ENCODE measurements at regions of chr1 and their contacts with region 1.

Region 1: DNA sequence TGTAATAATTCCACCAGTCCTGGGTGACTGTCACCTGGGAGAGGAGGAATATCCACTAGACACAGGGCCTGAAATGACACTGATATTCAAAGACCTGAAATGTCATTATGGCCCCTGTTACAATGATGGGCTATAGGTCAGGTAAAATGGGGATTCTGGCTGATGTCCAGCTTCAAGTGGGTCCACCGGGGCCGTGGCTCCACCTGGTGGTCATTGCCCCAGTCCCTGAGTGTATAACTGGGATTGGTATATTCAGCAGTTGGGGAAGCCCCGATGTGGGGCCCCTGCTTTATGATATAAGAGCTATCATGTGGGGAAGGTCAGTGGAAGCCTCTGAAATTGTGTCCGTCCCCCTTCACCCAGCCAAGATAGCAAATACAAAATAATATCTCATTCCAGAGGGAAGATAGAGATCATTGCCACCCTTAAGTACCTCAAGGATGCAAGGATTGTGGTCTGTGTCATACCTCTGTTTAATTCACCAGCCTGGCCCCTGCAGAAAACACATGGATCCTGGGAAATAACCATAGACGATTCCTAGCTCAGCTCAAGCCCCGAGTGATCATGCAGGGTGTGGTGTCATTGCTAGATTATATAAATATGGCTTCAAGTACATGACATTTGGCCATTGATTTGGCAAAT is 19.4 kb downstream of the PLEKHO1 start:
- DNase-seq: peak; percentile 52 to 88 (median 75)
- H3K4me3 ChIP-seq: no peak overlapping the region
- H3K27ac ChIP-seq: no peak overlapping the region
- H3K4me1 ChIP-seq: peaks cover 0 to 12% of the 10 kb centered on the region in 2 donors
- H3K27me3 ChIP-seq: no peaks in the 10 kb centered on the region
- CTCF ChIP-seq: peak; percentile 70 to 89 (median 83)
- POLR2A ChIP-seq: no peak

Region 2: GRCh38 chr1:150072959-150073358 is 96.1 kb before region 1 on chr1:
- intact Hi-C with region 1: loop called (anchors 5 kb)
- DNase-seq: no peak
- H3K4me3 ChIP-seq: no peak overlapping the region
- H3K27ac ChIP-seq: no peak overlapping the region
- H3K4me1 ChIP-seq: peaks cover 0 to 15% of the 10 kb centered on the region in 2 donors
- H3K27me3 ChIP-seq: no peaks in the 10 kb centered on the region
- CTCF ChIP-seq: peak; percentile 5 to 69 (median 54)
- POLR2A ChIP-seq: no peak

Region 3: GRCh38 chr1:150259758-150260669 is 90.9 kb after region 1 on chr1:
- intact Hi-C with region 1: no loop called
- DNase-seq: peak in 6 of 7 donors; percentile 68 to 77 (median 74)
- H3K4me3 ChIP-seq: peak overlapping the region in 1 of 4 donors; percentile 29
- H3K27ac ChIP-seq: peak overlapping the region in 4 of 5 donors; percentile 3 to 65 (median 43)
- H3K4me1 ChIP-seq: peaks cover 21 to 24% of the 10 kb centered on the region in 2 donors
- H3K27me3 ChIP-seq: no peaks in the 10 kb centered on the region
- CTCF ChIP-seq: no peak
- POLR2A ChIP-seq: peak in 1 of 2 donors; percentile 57

Measured in adrenal gland (tissue), 19 donors.